ENCODE measurements at regions of chr2 and their contacts with region 1.

Region 1: GRCh38 chr2:224778474-224778877 is 62.3 kb upstream of the CCDC195 start:
- DNase-seq: peak; percentile 73
- H3K4me3 ChIP-seq: no peak overlapping the region
- H3K27ac ChIP-seq: peak overlapping the region; percentile 0
- H3K4me1 ChIP-seq: peaks cover 31% of the 10 kb centered on the region
- CTCF ChIP-seq: peak; percentile 99

Region 2: GRCh38 chr2:224023188-224023587 is 755.3 kb before region 1 on chr2:
- CTCF ChIA-PET with region 1: no interaction called
- POLR2A ChIA-PET with region 1: no interaction called
- intact Hi-C with region 1: no loop called
- DNase-seq: no peak
- H3K4me3 ChIP-seq: no peak overlapping the region
- H3K27ac ChIP-seq: no peak overlapping the region
- H3K4me1 ChIP-seq: peaks cover 11% of the 10 kb centered on the region
- CTCF ChIP-seq: no peak

Region 3: GRCh38 chr2:224611938-224612337 is 166.5 kb before region 1 on chr2:
- CTCF ChIA-PET with region 1: no interaction called
- POLR2A ChIA-PET with region 1: interaction called, 4 read pairs
- intact Hi-C with region 1: loop called (anchors 1 kb)
- DNase-seq: peak; percentile 80
- H3K4me3 ChIP-seq: no peak overlapping the region
- H3K27ac ChIP-seq: no peak overlapping the region
- H3K4me1 ChIP-seq: peaks cover 10% of the 10 kb centered on the region
- CTCF ChIP-seq: peak; percentile 93

Region 4: GRCh38 chr2:224630659-224631550 is 147.6 kb before region 1 on chr2:
- CTCF ChIA-PET with region 1: no interaction called
- POLR2A ChIA-PET with region 1: no interaction called
- intact Hi-C with region 1: no loop called
- DNase-seq: no peak
- H3K4me3 ChIP-seq: no peak overlapping the region
- H3K27ac ChIP-seq: no peak overlapping the region
- H3K4me1 ChIP-seq: no peaks in the 10 kb centered on the region
- CTCF ChIP-seq: no peak

Region 5: GRCh38 chr2:224666951-224667553 is 111.4 kb before region 1 on chr2:
- CTCF ChIA-PET with region 1: no interaction called
- POLR2A ChIA-PET with region 1: interaction called, 3 read pairs
- intact Hi-C with region 1: loop called (anchors 5 kb)
- DNase-seq: peak; percentile 95
- H3K4me3 ChIP-seq: peak overlapping the region; percentile 53
- H3K27ac ChIP-seq: peak overlapping the region; percentile 98
- H3K4me1 ChIP-seq: peaks cover 53% of the 10 kb centered on the region
- CTCF ChIP-seq: no peak

Region 6: DNA sequence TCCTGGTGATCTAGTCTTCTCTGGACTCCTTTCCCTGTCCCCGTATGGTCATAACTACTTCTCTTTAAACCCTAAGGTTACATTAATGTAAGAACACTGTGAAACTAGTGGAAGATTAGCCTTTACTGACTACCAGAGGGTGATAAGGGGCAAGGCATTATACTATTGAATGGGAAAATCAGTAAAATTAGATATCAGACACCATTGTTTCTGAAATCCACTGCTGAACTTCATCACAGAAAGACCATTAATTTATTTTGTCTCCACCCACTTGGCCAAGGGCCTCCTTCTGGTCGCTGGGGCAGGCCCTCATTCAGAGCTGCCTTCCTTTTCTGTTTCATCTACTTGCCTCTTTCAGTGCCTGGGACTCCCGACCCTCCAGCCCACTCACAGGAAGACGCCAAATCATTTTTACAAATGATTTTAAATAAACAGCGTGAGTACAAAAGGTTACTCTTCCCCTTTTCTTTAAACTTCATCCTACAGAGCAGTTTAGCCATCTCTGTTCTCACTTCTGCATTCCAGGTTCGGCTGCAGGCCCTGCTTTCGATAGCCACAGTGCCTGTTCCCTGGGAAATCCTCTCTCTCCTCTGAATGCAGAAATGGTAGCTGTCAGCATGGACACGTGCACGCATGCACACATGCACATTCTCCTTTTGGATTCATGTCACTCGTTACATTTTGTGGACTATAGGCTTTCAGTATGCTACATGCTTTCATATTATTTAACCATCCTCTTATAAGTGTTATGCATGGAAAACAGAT is 334.1 kb after region 1 on chr2:
- CTCF ChIA-PET with region 1: no interaction called
- POLR2A ChIA-PET with region 1: no interaction called
- intact Hi-C with region 1: no loop called
- DNase-seq: peak; percentile 27
- H3K4me3 ChIP-seq: no peak overlapping the region
- H3K27ac ChIP-seq: no peak overlapping the region
- H3K4me1 ChIP-seq: peaks cover 11% of the 10 kb centered on the region
- CTCF ChIP-seq: no peak

Measured in OCI-LY7 (cell line).